Activated CD8-positive, alpha-beta T cell treated with anti-CD3 and anti-CD28 coated beads for 36 hours (primary cell): ENCODE measurements at regions of chr18 and their contacts with region 1.

Region 1: GRCh38 chr18:12990967-12991838 is at the start of gene CEP192:
- DNase-seq: peak; percentile 98
- ATAC-seq: peak; percentile 90
- H3K4me3 Mint-ChIP-seq: peak within 1 kb of the TSS; percentile 89
- H3K27ac Mint-ChIP-seq: peak within 1 kb of the TSS; percentile 96
- H3K4me1 Mint-ChIP-seq: peaks cover 13% of the 10 kb centered on the region
- H3K27me3 Mint-ChIP-seq: peaks cover 1% of the 10 kb centered on the region
- CTCF ChIP-seq: no peak
- total RNA-seq, gene CEP192: 39.5 to 42.9 TPM

Region 2: DNA sequence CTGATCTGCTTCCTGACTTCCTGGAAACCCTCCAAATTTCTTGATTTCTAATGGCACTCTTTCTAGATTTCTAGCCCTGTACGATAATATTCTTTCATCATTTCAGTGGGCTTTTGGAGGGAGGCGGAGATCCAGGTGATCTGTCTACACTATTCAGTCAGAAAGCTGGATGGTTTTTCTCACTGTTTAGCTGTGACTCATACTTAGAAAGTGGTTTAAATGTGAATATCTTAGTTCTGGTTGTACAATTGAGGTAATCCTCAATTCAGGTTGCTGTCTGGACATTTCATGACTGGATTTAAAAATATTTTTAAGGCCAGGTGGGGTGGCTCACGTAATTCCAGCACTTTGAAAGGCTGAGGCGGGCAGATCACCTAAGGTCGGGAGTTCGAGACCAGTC is 22.6 kb before region 1 on chr18:
- CTCF ChIA-PET with region 1: interaction called, 4 read pairs
- POLR2A ChIA-PET with region 1: interaction called, 12 read pairs
- intact Hi-C with region 1: no loop called
- DNase-seq: no peak
- ATAC-seq: no peak
- H3K4me3 Mint-ChIP-seq: no peak overlapping the region
- H3K27ac Mint-ChIP-seq: no peak overlapping the region
- H3K4me1 Mint-ChIP-seq: peaks cover 16% of the 10 kb centered on the region
- H3K27me3 Mint-ChIP-seq: no peaks in the 10 kb centered on the region
- CTCF ChIP-seq: no peak

Region 3: GRCh38 chr18:12975488-12975887 is 15.7 kb before region 1 on chr18:
- CTCF ChIA-PET with region 1: interaction called, 4 read pairs
- POLR2A ChIA-PET with region 1: interaction called, 26 read pairs
- intact Hi-C with region 1: no loop called
- DNase-seq: no peak
- ATAC-seq: no peak
- H3K4me3 Mint-ChIP-seq: no peak overlapping the region
- H3K27ac Mint-ChIP-seq: no peak overlapping the region
- H3K4me1 Mint-ChIP-seq: peaks cover 7% of the 10 kb centered on the region
- H3K27me3 Mint-ChIP-seq: no peaks in the 10 kb centered on the region
- CTCF ChIP-seq: no peak

Region 4: DNA sequence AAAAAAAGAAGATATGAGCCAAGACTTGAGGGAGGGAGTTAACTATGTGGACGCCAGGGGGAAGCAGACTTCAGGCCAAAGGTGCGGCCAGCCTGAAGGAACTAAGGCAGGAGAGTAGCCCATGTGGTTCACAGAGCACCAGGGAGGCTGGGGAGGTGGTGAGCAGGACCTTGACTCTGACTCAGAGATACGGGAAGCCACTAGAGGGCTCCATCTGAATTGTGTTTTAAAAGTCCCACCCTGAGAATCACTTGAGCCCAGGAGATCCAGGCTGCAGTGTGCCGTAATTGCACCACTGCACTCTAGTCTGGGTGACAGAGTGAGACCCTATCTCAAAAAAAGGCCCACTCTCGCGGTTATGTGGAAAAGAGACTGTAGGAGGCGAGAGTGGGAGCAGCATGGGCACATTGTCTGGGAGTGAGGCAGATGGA is 12.3 kb after region 1 on chr18:
- CTCF ChIA-PET with region 1: interaction called, 4 read pairs
- POLR2A ChIA-PET with region 1: interaction called, 12 read pairs
- intact Hi-C with region 1: no loop called
- DNase-seq: peak; percentile 44
- ATAC-seq: peak; percentile 52
- H3K4me3 Mint-ChIP-seq: no peak overlapping the region
- H3K27ac Mint-ChIP-seq: no peak overlapping the region
- H3K4me1 Mint-ChIP-seq: peaks cover 19% of the 10 kb centered on the region
- H3K27me3 Mint-ChIP-seq: no peaks in the 10 kb centered on the region
- CTCF ChIP-seq: peak; percentile 46

Region 5: DNA sequence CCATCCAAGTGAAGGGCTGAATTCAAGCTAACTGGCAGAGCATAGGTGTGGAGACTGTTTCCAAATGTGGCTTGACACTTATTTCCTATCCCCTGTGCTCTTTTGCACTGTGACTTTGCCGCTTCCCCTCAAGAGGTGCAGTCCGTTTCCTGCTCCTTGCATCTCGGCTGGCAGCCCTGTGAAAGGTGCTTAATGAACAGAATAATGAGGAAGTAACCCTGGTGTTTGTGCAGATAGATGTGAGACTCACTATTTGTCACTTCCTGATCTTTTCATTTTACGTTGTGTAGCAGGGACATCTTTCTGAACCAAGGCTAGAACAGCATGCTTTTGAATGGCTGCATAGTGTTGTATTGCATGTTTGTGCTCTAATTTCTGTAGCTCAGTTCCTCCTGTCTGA is 60.7 kb after region 1 on chr18:
- CTCF ChIA-PET with region 1: no interaction called
- POLR2A ChIA-PET with region 1: no interaction called
- intact Hi-C with region 1: no loop called
- DNase-seq: no peak
- ATAC-seq: peak; percentile 42
- H3K4me3 Mint-ChIP-seq: no peak overlapping the region
- H3K27ac Mint-ChIP-seq: peak overlapping the region; percentile 35
- H3K4me1 Mint-ChIP-seq: peaks cover 9% of the 10 kb centered on the region
- H3K27me3 Mint-ChIP-seq: no peaks in the 10 kb centered on the region
- CTCF ChIP-seq: no peak